ENCODE measurements at regions of chr5 and their contacts with region 1.

Region 1: GRCh38 chr5:75511435-75512384 is at the starts of genes CERT1 and POLK:
- DNase-seq: peak; percentile 98
- H3K4me3 Mint-ChIP-seq: peak within 1 kb of the TSS; percentile 79
- H3K27ac Mint-ChIP-seq: peak within 1 kb of the TSS; percentile 96
- H3K4me1 Mint-ChIP-seq: peaks cover 28% of the 10 kb centered on the region
- H3K27me3 Mint-ChIP-seq: no peaks in the 10 kb centered on the region
- CTCF ChIP-seq: no peak
- total RNA-seq, gene CERT1: 19.6 and 21.7 TPM in 2 replicates
- total RNA-seq, gene POLK: 30.2 and 34.9 TPM in 2 replicates

Region 2: DNA sequence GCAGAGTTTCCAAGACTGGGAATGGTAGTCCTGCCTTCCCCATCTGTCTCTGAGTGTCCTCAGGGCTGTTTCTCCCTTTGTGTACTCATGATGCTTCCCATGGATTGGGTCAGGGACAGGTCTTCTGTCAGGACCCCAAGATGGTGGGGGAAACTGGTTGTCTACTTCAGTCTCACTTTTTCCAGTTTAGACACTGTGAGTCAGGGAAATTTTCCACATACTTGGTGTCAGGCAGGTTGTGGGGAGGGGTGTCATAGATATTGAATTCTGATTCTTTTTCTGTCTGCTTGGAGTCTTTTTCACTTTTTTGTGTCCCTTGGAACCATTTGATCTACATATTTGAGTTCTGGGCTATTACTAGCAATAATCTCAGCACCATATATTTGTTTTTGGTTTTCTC is 10.3 kb after region 1 on chr5:
- CTCF ChIA-PET with region 1: no interaction called
- POLR2A ChIA-PET with region 1: interaction called, 30 read pairs
- intact Hi-C with region 1: no loop called
- DNase-seq: no peak
- H3K4me3 Mint-ChIP-seq: no peak overlapping the region
- H3K27ac Mint-ChIP-seq: no peak overlapping the region
- H3K4me1 Mint-ChIP-seq: peaks cover 19% of the 10 kb centered on the region
- H3K27me3 Mint-ChIP-seq: no peaks in the 10 kb centered on the region
- CTCF ChIP-seq: no peak

Region 3: GRCh38 chr5:75566710-75567309 is 55.1 kb after region 1 on chr5:
- CTCF ChIA-PET with region 1: no interaction called
- POLR2A ChIA-PET with region 1: interaction called, 20 read pairs
- intact Hi-C with region 1: loop called (anchors 5 kb)
- DNase-seq: peak; percentile 87
- H3K4me3 Mint-ChIP-seq: peak overlapping the region; percentile 71
- H3K27ac Mint-ChIP-seq: peak overlapping the region; percentile 85
- H3K4me1 Mint-ChIP-seq: peaks cover 33% of the 10 kb centered on the region
- H3K27me3 Mint-ChIP-seq: no peaks in the 10 kb centered on the region
- CTCF ChIP-seq: no peak

Region 4: GRCh38 chr5:75574791-75575190 is 63.1 kb after region 1 on chr5:
- CTCF ChIA-PET with region 1: no interaction called
- POLR2A ChIA-PET with region 1: interaction called, 11 read pairs
- intact Hi-C with region 1: loop called (anchors 5 kb)
- DNase-seq: no peak
- H3K4me3 Mint-ChIP-seq: no peak overlapping the region
- H3K27ac Mint-ChIP-seq: no peak overlapping the region
- H3K4me1 Mint-ChIP-seq: no peaks in the 10 kb centered on the region
- H3K27me3 Mint-ChIP-seq: no peaks in the 10 kb centered on the region
- CTCF ChIP-seq: no peak

Region 5: DNA sequence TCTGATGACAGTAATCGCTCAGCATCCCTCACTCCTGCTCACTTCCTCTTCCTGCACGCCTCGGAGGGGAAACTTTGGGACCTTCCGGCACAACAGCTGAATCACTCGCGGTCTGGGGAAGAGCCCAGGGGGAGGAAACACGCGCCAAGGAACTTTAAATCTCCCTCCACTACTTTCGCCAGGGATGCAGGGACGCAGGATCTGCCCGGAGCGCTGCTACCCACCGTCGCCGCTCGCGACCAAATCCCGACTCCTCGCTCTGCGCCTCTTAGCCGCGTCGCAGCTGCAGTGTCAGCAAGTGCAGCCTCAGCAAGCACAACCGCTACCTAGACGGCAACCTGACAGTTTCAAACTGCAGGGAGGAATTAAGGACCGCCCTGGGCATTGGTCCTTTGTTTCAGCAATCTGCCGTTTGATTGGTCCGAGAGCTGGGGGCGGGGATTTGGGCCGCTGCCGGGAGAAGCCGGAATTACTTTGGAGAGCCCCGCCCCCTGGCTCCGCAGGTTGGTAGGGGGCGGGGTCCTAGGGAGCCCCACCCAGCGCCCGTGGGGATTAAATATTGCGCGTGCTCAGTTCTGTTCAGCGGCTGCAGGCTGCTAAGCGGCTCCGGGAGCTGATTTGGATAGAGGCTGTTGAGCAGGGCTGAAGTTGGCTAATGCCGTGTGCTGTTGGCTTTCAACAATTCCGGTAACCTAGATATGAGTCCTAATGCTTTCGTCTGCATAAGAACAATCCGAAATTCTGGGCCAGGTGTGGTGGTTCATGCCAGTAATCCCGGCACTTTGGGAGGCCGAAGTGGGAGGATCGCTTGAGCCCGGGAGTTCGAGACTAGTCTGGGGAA is 205.6 kb after region 1 on chr5 and contains the start of gene POC5:
- CTCF ChIA-PET with region 1: no interaction called
- POLR2A ChIA-PET with region 1: interaction called, 12 read pairs
- intact Hi-C with region 1: no loop called
- DNase-seq: peak; percentile 97
- H3K4me3 Mint-ChIP-seq: peak within 1 kb of the TSS; percentile 90
- H3K27ac Mint-ChIP-seq: peak within 1 kb of the TSS; percentile 90
- H3K4me1 Mint-ChIP-seq: peaks cover 21% of the 10 kb centered on the region
- H3K27me3 Mint-ChIP-seq: no peaks in the 10 kb centered on the region
- CTCF ChIP-seq: no peak
- total RNA-seq, gene POC5: 14.3 and 17.4 TPM in 2 replicates

Region 6: DNA sequence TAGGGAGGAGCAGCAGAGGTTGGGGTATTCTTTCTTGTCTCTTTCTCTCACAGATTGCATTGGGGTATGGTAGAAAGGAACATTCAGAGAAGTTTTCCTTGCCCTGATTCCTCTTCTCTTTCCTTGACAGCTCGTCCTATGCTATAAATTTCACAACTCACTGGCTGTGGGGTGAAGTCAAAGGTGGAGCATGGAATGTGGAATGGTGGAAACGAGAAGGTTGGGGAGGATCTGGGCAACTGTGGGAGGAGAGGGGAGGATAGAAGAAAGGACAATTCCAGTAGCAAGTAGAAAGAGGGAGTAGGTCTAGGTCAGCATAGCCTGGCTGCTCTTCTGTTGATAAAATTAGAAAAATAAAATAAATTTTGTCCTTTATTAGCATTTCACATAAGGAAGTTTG is 244.5 kb after region 1 on chr5:
- CTCF ChIA-PET with region 1: no interaction called
- POLR2A ChIA-PET with region 1: no interaction called
- intact Hi-C with region 1: no loop called
- DNase-seq: no peak
- H3K4me3 Mint-ChIP-seq: no peak overlapping the region
- H3K27ac Mint-ChIP-seq: no peak overlapping the region
- H3K4me1 Mint-ChIP-seq: no peaks in the 10 kb centered on the region
- H3K27me3 Mint-ChIP-seq: peaks cover 74% of the 10 kb centered on the region
- CTCF ChIP-seq: no peak

Region 7: DNA sequence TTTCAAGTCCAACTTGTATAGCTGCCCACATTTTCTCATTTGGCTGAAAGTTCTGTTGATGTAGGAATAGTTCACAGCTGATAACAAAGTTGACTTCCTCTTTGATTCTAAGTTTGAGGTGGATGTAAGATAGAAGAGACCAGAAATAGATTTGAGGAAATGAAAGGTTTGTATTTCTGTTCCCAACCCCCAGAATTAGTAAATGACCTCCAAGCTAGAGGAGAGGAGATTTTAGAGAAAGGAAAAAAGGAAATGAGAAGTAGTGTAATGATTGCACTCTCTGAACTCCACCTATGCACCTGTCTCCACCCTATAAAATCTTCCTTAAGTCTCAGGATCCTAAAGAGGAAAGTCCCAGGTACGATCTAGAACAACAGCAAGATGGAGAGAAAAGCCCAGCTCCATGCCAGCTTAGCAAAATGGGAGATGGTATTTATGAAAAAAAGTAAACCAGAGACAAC is 335.9 kb after region 1 on chr5:
- CTCF ChIA-PET with region 1: no interaction called
- POLR2A ChIA-PET with region 1: no interaction called
- intact Hi-C with region 1: no loop called
- DNase-seq: no peak
- H3K4me3 Mint-ChIP-seq: no peak overlapping the region
- H3K27ac Mint-ChIP-seq: no peak overlapping the region
- H3K4me1 Mint-ChIP-seq: no peaks in the 10 kb centered on the region
- H3K27me3 Mint-ChIP-seq: peaks cover 78% of the 10 kb centered on the region
- CTCF ChIP-seq: no peak

Region 8: GRCh38 chr5:76074487-76075065 is 562.9 kb after region 1 on chr5:
- CTCF ChIA-PET with region 1: no interaction called
- POLR2A ChIA-PET with region 1: no interaction called
- intact Hi-C with region 1: no loop called
- DNase-seq: peak; percentile 31
- H3K4me3 Mint-ChIP-seq: no peak overlapping the region
- H3K27ac Mint-ChIP-seq: no peak overlapping the region
- H3K4me1 Mint-ChIP-seq: no peaks in the 10 kb centered on the region
- H3K27me3 Mint-ChIP-seq: peaks cover 71% of the 10 kb centered on the region
- CTCF ChIP-seq: no peak

Measured in MCF 10A (cell line).